Esophagus muscularis mucosa (tissue), 4 donors: ENCODE measurements at regions of chr11 and their contacts with region 1.

Region 1: DNA sequence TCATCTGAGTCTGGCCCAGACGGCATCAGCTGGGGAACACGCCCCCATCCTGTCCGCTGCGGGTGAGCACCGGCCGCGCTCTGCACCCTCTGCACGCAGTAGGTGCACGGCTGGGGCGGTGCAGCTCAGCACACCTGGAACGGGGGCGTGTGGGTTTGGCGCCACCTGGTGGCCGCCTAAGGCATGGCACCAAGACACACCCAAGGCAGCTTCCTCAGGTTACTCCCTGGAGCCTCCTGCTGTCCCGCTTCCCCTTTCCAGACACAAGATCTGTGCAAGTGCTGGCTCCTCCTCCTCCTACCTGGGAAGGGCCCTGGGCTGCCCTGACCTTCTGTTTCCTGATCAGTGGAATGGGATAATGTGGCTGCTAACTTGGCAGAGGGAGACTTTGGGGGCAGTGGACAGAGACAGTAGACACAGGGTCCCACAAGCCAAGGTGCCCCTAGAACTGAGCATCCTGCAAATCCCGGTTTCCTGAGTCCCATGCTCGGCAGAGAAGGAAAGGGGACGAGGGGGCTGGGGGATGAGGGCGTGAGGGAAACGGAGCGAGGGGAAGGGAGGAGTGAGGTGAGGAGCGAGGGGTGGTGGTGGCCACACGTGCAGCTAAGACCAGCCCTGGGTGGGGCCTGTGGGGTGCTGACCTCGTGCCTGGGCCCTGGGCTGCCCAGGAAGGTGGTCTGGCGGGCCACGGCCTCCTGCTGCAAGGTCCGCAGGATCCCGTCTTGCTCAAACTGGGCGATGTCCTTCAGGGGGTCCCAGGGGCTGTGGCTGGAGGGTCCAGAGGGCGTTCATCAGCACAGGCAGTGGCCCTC is 34.8 kb upstream of the CARS1 start:
- DNase-seq: no peak
- H3K4me3 ChIP-seq: no peak overlapping the region
- H3K27ac ChIP-seq: no peak overlapping the region
- H3K4me1 ChIP-seq: peaks cover 13 to 44% (median 22%) of the 10 kb centered on the region in 4 donors
- H3K27me3 ChIP-seq: no peaks in the 10 kb centered on the region
- CTCF ChIP-seq: peak in 2 of 3 experiments; percentile 92 to 99
- EP300 ChIP-seq: no peak
- POLR2A ChIP-seq: no peak

Region 2: GRCh38 chr11:2963112-2963817 is 128.7 kb before region 1 on chr11:
- intact Hi-C with region 1: no loop called
- DNase-seq: no peak
- H3K4me3 ChIP-seq: no peak overlapping the region
- H3K27ac ChIP-seq: no peak overlapping the region
- H3K4me1 ChIP-seq: peaks cover 0 to 13% (median 0%) of the 10 kb centered on the region in 4 donors
- H3K27me3 ChIP-seq: no peaks in the 10 kb centered on the region
- CTCF ChIP-seq: no peak
- EP300 ChIP-seq: no peak
- POLR2A ChIP-seq: no peak

Region 3: GRCh38 chr11:3037040-3037944 is 54.7 kb before region 1 on chr11:
- intact Hi-C with region 1: loop called (anchors 1 kb)
- DNase-seq: peak; percentile 94
- H3K4me3 ChIP-seq: no peak overlapping the region
- H3K27ac ChIP-seq: peak overlapping the region in 2 of 4 donors; percentile 1 to 20
- H3K4me1 ChIP-seq: peaks cover 6 to 16% (median 8%) of the 10 kb centered on the region in 4 donors
- H3K27me3 ChIP-seq: no peaks in the 10 kb centered on the region
- CTCF ChIP-seq: peak; percentile 71 to 80 (median 79)
- EP300 ChIP-seq: no peak
- POLR2A ChIP-seq: no peak

Region 4: DNA sequence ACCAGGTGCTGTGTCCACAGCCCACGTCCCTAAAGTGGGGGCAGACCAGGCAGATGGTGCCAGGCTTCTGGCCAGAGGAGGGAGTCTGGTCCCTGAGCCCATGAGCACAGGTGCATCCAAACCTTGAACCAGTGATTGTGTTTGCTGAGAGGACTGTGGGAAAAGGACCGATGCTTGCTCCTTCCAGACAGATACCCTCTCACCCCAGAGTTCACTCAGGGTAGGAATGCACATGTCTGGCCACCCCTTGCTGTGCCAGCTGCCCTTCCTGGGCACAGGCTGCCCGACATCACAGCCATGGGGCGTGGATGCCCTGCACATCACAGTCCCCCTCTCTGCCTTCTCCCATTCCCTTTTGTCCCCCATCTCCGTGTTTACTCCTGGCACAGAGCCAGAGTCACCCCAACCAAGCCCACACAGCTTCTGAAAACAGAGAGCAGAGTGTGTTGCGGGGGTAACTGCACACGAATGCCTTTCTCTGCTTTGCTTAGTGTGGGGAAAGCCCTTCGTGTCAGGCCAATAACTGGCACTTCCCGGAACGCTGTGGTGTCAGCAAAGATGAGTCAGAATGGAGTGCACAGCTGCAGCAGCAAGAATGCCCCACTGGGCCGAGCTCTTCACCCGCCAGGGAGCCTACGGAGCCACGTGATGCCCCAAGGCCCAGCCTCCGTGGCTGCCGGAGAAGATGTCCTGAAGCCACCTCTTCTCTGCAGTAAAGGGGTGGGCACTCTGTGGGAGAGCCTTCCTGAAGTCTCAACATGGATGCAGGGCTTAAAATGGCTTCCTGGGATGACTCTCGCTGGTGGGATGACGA is 42.4 kb before region 1 on chr11:
- intact Hi-C with region 1: loop called (anchors 5 kb)
- DNase-seq: no peak
- H3K4me3 ChIP-seq: peak overlapping the region in 2 of 4 donors; percentile 2 to 14
- H3K27ac ChIP-seq: peak overlapping the region; percentile 75 to 88 (median 80)
- H3K4me1 ChIP-seq: peaks cover 24 to 82% (median 65%) of the 10 kb centered on the region in 4 donors
- H3K27me3 ChIP-seq: no peaks in the 10 kb centered on the region
- CTCF ChIP-seq: peak; percentile 35 to 52 (median 48)
- EP300 ChIP-seq: peak; percentile 58
- POLR2A ChIP-seq: no peak

Region 5: DNA sequence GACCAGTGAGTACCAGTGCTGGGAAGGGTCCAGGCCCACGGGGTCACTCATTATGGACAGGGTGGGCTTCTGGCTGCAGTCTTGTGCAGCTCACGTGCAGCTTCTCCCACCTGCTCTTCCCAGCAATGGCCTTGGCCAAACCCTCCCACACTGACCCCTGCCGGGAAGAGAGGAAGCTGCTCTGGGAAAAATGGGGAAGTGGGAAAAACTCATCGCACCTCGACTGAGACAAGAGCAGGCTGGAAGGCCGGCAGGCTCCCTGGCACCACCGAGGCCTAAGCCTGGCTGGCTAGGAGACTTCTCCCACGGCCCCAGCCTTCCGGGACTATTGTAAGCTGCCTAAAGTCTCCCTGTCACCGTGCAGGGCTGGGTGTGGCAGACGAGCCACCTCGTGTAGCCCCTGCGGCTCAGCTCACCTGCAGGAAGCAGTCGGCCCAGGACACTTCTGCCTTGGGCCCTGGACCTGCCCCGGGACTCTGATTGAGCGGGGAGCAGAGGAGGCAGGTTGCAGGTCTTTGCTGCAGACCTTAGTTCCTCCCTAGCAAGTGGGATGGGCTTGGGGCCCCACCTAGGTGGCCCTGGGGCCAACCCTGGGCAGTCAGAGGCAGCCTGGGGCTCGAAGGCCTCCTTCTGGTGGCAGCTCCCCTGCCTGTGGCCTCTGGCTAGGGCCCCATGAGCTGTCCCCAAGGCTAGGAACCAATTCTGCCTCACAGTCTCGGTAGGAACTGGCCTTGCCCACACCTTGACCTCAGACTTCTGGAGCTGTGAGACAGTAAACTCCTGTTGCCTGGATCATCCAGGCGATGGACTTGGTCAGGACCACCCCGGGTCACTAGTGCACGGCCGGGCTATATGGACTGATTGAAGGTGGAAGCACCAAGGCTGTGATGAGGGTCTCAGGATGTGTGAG is 103.5 kb after region 1 on chr11:
- intact Hi-C with region 1: no loop called
- DNase-seq: no peak
- H3K4me3 ChIP-seq: no peak overlapping the region
- H3K27ac ChIP-seq: no peak overlapping the region
- H3K4me1 ChIP-seq: no peaks in the 10 kb centered on the region
- H3K27me3 ChIP-seq: peaks cover 0 to 37% (median 0%) of the 10 kb centered on the region in 4 donors
- CTCF ChIP-seq: peak; percentile 24 to 55 (median 37)
- EP300 ChIP-seq: no peak
- POLR2A ChIP-seq: no peak